Sigmoid colon (tissue), 7 donors: ENCODE measurements at regions of chr11 and their contacts with region 1.

Region 1: GRCh38 chr11:12331239-12331874 is 46.0 kb upstream of the PARVA start:
- DNase-seq: peak; percentile 93
- H3K4me3 ChIP-seq: no peak overlapping the region
- H3K27ac ChIP-seq: peak overlapping the region; percentile 25 to 91 (median 84)
- H3K4me1 ChIP-seq: peaks cover 2 to 41% (median 34%) of the 10 kb centered on the region in 4 donors
- H3K27me3 ChIP-seq: no peaks in the 10 kb centered on the region
- CTCF ChIP-seq: peak; percentile 69 to 85 (median 76)
- EP300 ChIP-seq: no peak
- POLR2A ChIP-seq: no peak

Region 2: DNA sequence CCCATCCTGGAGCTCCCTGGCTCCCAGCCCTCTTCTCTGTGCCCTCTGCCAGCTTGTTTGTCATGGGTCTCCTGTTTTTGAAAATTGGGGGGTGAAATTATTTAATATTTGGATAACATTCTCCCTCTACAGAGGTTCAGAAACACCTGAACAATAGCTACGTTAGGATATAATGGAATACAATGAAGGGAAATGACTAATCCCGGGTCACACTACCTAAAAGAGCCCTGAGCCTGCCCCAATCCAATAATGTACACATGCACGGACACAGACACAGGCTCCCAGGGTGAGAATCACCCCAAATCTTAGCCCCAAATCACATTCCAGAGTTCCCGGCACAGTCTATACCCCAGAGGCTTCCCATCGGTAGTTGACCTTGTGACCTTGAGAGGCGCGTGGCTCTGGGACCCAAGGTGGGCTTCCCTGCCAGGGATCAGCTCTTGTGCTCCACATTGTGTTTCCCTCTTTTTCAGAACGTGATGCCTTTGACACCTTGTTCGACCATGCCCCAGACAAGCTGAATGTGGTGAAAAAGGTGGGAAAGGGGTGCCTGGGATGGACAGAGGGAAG is 181.6 kb after region 1 on chr11:
- intact Hi-C with region 1: loop called (anchors 5 kb)
- DNase-seq: no peak
- H3K4me3 ChIP-seq: no peak overlapping the region
- H3K27ac ChIP-seq: peak overlapping the region in 2 of 4 donors; percentile 36 to 50
- H3K4me1 ChIP-seq: peaks cover 0 to 17% (median 0%) of the 10 kb centered on the region in 4 donors
- H3K27me3 ChIP-seq: no peaks in the 10 kb centered on the region
- CTCF ChIP-seq: no peak
- EP300 ChIP-seq: no peak
- POLR2A ChIP-seq: no peak